ENCODE measurements at regions of chr19 and their contacts with region 1.

Region 1: DNA sequence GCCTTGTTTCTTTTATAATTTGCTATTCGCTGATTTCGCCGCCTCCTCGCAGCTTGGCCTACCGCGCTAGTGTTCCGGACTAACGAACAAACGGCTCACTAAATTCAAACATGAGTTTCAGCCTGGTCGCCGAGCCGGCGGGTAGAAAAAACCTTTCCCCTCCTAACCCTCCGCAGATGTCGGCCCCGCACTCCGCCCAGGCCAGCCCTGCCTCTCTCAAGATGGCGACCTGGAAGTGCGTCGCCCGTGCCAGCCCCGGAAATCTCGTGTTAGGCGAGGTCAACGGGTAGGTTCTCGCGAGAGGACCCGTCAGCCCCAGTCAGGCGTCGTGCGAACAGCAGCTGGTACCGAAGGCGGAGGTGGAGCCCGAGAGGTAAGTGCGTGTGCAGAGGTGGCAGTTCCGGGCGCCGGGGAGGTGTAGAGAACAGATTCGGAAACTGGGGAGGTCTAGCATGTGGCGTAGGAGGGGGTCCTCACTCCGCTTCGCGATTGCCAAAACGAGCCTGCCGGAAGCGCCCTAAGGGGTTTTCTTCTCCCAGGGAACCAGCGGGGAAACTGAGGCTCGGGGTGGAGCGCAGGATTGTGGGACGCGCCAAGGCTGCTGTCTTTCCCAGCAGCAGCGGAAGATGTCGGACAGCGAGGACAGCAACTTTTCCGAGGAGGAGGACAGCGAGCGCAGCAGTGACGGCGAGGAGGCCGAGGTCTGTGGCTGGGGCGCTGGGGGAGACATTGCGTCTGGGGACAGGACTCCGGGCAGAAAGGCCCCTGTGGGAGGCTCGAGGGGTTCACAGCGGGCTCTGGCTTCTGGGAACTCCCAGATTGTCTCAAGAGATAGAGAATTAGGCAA is at the start of gene SUPT5H:
- DNase-seq: peak; percentile 100
- H3K4me3 ChIP-seq: peak within 1 kb of the TSS; percentile 92
- H3K27ac ChIP-seq: peak within 1 kb of the TSS; percentile 86
- H3K4me1 ChIP-seq: peaks cover 56% of the 10 kb centered on the region
- CTCF ChIP-seq: no peak
- total RNA-seq, gene SUPT5H: 70.1 and 74.6 TPM in 2 replicates

Region 2: GRCh38 chr19:39345956-39346355 is 99.5 kb before region 1 on chr19:
- CTCF ChIA-PET with region 1: no interaction called
- POLR2A ChIA-PET with region 1: no interaction called
- intact Hi-C with region 1: no loop called
- DNase-seq: no peak
- H3K4me3 ChIP-seq: no peak overlapping the region
- H3K27ac ChIP-seq: no peak overlapping the region
- H3K4me1 ChIP-seq: peaks cover 22% of the 10 kb centered on the region
- CTCF ChIP-seq: peak; percentile 55

Region 3: DNA sequence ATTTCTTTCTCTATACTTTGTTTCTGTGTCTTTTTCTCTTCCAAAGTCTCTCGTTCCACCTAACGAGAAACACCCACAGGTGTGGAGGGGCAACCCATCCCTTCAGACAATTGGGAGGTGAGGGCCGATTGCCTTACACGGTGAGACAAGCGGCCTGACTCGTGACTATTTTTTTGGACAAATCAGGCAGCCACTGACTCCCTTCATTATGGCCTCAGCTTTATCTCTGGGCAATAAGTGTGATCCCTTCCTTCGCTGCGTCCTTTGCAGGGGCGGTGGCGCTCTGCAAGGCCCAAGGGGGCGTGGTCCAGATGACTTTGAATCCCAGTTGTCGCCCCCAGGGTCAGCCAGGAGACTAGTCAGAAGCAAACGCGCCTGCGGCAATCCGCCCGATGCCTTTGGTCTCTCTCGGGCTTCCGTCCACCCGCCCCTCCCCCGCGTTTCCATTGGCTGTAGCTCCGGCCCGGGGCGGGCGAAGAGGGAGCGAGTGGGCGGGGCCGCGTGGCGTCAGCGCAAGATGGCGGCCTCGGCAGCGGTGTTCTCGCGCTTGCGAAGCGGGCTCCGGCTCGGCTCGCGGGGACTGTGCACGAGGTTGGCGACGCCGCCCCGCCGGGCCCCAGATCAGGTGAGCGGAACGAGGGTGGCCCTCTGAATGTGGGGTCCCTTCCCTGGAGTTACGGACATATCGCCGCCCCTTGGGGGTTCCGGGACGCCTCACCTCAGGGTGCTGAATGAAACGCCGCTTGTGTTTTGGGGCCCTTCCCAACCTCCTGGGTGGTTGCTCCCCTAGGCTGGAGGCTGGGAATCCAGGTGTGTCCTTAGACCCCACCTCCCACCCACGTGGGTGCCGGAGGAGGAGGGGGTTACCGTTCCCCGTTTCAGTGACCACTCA is 35.1 kb after region 1 on chr19 and contains the start of gene TIMM50:
- CTCF ChIA-PET with region 1: no interaction called
- POLR2A ChIA-PET with region 1: interaction called, 9 read pairs
- intact Hi-C with region 1: loop called (anchors 1 kb)
- DNase-seq: peak; percentile 98
- H3K4me3 ChIP-seq: peak within 1 kb of the TSS; percentile 91
- H3K27ac ChIP-seq: peak within 1 kb of the TSS; percentile 57
- H3K4me1 ChIP-seq: peaks cover 17% of the 10 kb centered on the region
- CTCF ChIP-seq: no peak
- total RNA-seq, gene TIMM50: 98.1 and 116 TPM in 2 replicates

Region 4: DNA sequence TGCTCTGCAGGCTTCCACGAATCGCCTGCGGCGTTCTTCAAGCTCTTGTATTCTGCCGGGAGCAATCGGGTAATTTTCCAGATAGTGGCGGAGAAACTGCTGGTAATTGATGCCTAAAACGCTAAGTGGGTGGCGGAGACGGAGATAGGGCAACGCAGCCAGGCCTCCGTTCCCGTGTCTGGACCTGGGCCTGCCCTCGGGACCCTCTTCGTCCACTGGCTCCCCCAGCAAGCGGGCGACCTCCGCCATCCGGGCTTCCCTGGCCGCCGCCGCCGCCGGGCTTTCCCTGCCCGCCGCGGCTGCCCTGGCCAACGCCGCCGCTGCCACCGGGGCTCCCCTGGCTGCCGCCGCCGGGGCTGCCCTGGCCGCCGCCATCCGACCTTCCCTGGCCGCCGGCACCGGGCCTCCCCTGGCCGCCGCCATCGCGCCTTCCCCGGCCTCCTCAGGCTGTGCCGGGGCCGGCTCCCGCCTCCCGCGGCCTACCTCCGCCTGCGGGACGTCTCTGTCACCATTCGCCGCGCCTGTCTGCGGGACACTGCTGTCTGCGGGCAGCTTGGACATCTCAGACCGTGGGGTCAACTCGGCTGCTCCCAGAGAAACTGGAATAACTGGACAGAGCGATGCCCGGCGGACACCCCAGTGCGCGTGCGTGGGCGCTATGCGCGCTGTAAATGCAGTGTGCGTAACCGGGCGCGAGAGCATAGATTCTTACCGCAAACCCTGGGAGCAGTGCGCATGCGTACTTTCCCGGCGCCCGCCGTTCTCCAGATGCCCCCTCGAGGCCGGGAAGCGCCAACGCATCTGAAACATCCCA is 94.2 kb after region 1 on chr19 and contains the start of gene EID2:
- CTCF ChIA-PET with region 1: interaction called, 6 read pairs
- POLR2A ChIA-PET with region 1: interaction called, 5 read pairs
- intact Hi-C with region 1: loop called (anchors 1 kb)
- DNase-seq: peak; percentile 95
- H3K4me3 ChIP-seq: peak within 1 kb of the TSS; percentile 86
- H3K27ac ChIP-seq: peak within 1 kb of the TSS; percentile 30
- H3K4me1 ChIP-seq: peaks cover 42% of the 10 kb centered on the region
- CTCF ChIP-seq: no peak; the same call in 1 of the 2 replicates
- total RNA-seq, gene EID2: 19.1 and 22.9 TPM in 2 replicates

Measured in OCI-LY7 (cell line).